CD8-positive, alpha-beta T cell (primary cell): ENCODE measurements at regions of chr13 and their contacts with region 1.

Region 1: GRCh38 chr13:44141725-44142539 is 231.7 kb upstream of the SERP2 start:
- DNase-seq: peak; percentile 84 to 98 (median 91)
- ATAC-seq: peak; percentile 96
- H3K4me3 ChIP-seq: peak overlapping the region; percentile 78 to 81
- H3K4me3 Mint-ChIP-seq: peak overlapping the region; percentile 91
- H3K27ac ChIP-seq: peak overlapping the region; percentile 68 to 89
- H3K27ac Mint-ChIP-seq: peak overlapping the region; percentile 94
- H3K4me1 ChIP-seq: peaks cover 13% of the 10 kb centered on the region
- H3K4me1 Mint-ChIP-seq: peaks cover 15% of the 10 kb centered on the region
- H3K27me3 ChIP-seq: no peaks in the 10 kb centered on the region
- H3K27me3 Mint-ChIP-seq: peaks cover 2% of the 10 kb centered on the region
- CTCF ChIP-seq: no peak

Region 2: DNA sequence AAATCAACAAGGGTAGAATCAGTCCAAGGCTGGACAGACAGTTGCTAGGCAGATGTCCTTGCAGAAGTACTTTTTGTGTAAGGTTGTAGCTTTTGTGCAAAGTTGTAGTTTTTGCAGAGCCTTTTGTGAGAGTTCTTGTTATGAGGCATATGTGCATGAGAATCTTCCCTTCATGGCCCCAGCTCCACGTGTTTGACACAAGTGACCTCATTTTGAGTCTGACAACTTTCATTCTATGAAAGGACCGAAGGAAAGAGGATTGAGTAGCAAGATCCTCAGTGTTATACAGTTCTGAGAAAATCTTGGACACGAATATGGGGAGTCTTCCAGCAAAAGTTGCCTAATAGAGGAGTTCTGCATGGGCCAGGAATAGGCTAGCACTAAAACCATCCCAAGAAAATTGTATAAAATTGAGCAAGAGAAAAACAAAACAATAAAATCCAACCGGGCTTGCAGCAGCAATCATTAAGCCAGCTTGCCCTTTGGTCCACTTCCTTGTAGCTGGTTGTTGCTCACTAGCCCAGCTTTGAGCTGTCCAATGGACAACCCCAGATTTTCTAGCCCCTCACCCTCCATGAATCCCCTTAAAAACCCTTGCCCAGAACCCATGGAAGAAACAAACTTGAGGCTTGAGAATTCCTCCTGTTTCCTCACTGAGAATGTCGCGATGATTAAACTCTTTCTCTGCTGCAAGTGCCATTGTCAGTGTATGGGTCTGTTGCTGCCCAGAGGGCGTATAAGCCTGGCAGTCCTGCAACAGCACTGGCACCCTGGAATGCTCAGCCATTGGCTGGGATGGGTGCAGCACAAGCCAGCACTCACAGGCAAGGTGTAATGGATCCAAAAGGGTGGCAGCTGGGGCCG is 1156.4 kb before region 1 on chr13:
- CTCF ChIA-PET with region 1: no interaction called
- POLR2A ChIA-PET with region 1: no interaction called
- intact Hi-C with region 1: loop called in 1 of 2 experiments (anchors 10 kb)
- DNase-seq: no peak
- ATAC-seq: no peak
- H3K4me3 ChIP-seq: no peak overlapping the region
- H3K4me3 Mint-ChIP-seq: no peak overlapping the region
- H3K27ac ChIP-seq: no peak overlapping the region
- H3K27ac Mint-ChIP-seq: no peak overlapping the region
- H3K4me1 ChIP-seq: peaks cover 8% of the 10 kb centered on the region
- H3K4me1 Mint-ChIP-seq: peaks cover 11% of the 10 kb centered on the region
- H3K27me3 ChIP-seq: no peaks in the 10 kb centered on the region
- H3K27me3 Mint-ChIP-seq: no peaks in the 10 kb centered on the region
- CTCF ChIP-seq: no peak

Region 3: GRCh38 chr13:44013758-44014291 is 128.1 kb before region 1 on chr13:
- CTCF ChIA-PET with region 1: no interaction called
- POLR2A ChIA-PET with region 1: no interaction called
- intact Hi-C with region 1: no loop called
- DNase-seq: no peak
- ATAC-seq: no peak
- H3K4me3 ChIP-seq: no peak overlapping the region
- H3K4me3 Mint-ChIP-seq: no peak overlapping the region
- H3K27ac ChIP-seq: no peak overlapping the region
- H3K27ac Mint-ChIP-seq: no peak overlapping the region
- H3K4me1 ChIP-seq: no peaks in the 10 kb centered on the region
- H3K4me1 Mint-ChIP-seq: no peaks in the 10 kb centered on the region
- H3K27me3 ChIP-seq: no peaks in the 10 kb centered on the region
- H3K27me3 Mint-ChIP-seq: no peaks in the 10 kb centered on the region
- CTCF ChIP-seq: no peak

Region 4: GRCh38 chr13:44191504-44192171 is 49.7 kb after region 1 on chr13:
- CTCF ChIA-PET with region 1: no interaction called
- POLR2A ChIA-PET with region 1: no interaction called
- intact Hi-C with region 1: loop called (anchors 2 to 5 kb)
- DNase-seq: peak in 8 of 9 experiments; percentile 7 to 76 (median 38)
- ATAC-seq: peak; percentile 80
- H3K4me3 ChIP-seq: no peak overlapping the region
- H3K4me3 Mint-ChIP-seq: peak overlapping the region; percentile 40
- H3K27ac ChIP-seq: peak overlapping the region; percentile 5 to 9
- H3K27ac Mint-ChIP-seq: peak overlapping the region; percentile 87
- H3K4me1 ChIP-seq: peaks cover 9% of the 10 kb centered on the region
- H3K4me1 Mint-ChIP-seq: peaks cover 31% of the 10 kb centered on the region
- H3K27me3 ChIP-seq: no peaks in the 10 kb centered on the region
- H3K27me3 Mint-ChIP-seq: no peaks in the 10 kb centered on the region
- CTCF ChIP-seq: peak; percentile 26

Region 5: DNA sequence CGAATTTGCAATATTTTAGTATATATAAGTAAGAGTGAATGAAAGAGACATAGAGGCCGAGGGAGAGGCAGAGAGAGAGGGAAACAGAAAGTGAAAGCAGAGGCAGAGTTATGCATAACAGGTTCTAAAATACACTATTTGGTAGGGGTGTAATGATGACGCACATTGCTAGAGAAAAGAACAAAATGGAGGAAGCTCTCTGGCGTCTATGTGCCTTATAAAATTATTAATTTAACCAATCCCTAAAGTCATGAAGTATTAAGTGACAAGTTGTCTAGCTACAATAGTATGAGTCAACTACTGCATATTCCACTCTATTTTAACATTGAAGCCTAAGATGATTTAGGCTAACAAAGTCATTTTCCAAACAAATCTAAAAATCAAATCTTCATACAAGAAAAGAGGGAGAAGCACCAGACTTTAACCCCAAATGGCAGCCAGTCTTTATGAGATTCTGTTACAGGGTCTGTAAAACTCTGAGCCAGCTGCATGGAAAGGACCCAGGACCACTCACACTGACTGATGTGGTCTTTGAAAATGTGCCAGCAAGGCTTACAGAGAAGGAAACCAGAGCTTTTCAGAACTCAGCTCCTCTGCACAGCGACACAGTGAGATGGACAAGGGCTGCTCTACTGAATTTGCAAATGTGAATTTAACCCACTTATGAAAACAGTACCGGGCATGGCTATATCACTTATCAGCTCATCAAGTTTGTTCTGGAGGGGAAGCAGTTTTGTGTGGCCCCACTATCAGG is 132.7 kb after region 1 on chr13:
- CTCF ChIA-PET with region 1: no interaction called
- POLR2A ChIA-PET with region 1: interaction called, 3 read pairs
- intact Hi-C with region 1: loop called (anchors 1 to 2 kb)
- DNase-seq: peak in 8 of 9 experiments; percentile 17 to 91 (median 37)
- ATAC-seq: peak; percentile 92
- H3K4me3 ChIP-seq: peak overlapping the region; percentile 34 to 41
- H3K4me3 Mint-ChIP-seq: peak overlapping the region; percentile 73
- H3K27ac ChIP-seq: peak overlapping the region; percentile 81 to 96
- H3K27ac Mint-ChIP-seq: peak overlapping the region; percentile 98
- H3K4me1 ChIP-seq: peaks cover 35% of the 10 kb centered on the region
- H3K4me1 Mint-ChIP-seq: peaks cover 51% of the 10 kb centered on the region
- H3K27me3 ChIP-seq: no peaks in the 10 kb centered on the region
- H3K27me3 Mint-ChIP-seq: no peaks in the 10 kb centered on the region
- CTCF ChIP-seq: no peak

Region 6: DNA sequence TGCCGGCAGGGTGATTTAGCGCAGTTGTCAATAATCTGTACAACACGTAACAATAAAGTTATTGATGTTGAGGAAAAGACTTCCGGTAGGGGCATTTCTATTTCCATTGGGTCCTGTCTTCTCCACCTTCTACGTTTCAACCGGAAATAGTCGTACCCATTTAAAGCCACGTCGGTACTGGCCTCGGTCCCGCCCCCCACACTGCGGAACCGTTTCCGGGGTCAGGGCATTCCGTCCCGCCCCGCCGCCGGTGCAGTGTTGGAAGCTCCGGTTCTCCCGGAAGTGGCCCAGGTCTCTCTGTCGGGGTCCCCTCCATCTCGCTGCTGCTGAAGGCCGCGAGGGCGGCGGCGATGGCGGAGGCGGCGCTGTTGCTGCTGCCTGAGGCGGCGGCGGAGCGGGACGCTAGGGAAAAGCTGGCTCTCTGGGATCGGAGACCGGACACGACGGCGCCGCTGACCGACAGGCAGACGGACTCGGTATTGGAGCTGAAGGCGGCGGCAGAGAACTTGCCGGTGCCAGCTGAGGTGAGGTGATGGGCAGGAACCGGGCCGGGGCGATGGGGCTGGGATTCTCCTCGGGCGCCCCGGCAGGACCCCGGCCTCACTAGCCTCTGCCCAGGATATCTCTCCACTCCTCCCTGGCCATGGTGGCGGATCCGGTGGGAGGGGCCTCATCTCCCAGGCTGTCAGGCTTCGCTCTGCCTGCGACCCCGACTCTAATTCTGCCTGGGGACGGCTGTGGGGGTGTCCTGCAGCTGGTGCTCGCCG is 1322.9 kb after region 1 on chr13 and contains the start of gene COG3:
- CTCF ChIA-PET with region 1: no interaction called
- POLR2A ChIA-PET with region 1: no interaction called
- intact Hi-C with region 1: loop called in 1 of 2 experiments (anchors 10 kb)
- DNase-seq: peak; percentile 86 to 98 (median 94)
- ATAC-seq: peak; percentile 94
- H3K4me3 ChIP-seq: peak within 1 kb of the TSS; percentile 77 to 85
- H3K4me3 Mint-ChIP-seq: peak within 1 kb of the TSS; percentile 92
- H3K27ac ChIP-seq: peak within 1 kb of the TSS; percentile 82 to 95
- H3K27ac Mint-ChIP-seq: peak within 1 kb of the TSS; percentile 91
- H3K4me1 ChIP-seq: peaks cover 38% of the 10 kb centered on the region
- H3K4me1 Mint-ChIP-seq: peaks cover 49% of the 10 kb centered on the region
- H3K27me3 ChIP-seq: no peaks in the 10 kb centered on the region
- H3K27me3 Mint-ChIP-seq: no peaks in the 10 kb centered on the region
- CTCF ChIP-seq: peak; percentile 6
- total RNA-seq, gene COG3: 45.9 to 47.6 TPM